Caco-2 (cell line): ENCODE measurements at regions of chr2 and their contacts with region 1.

Region 1: GRCh38 chr2:225512878-225513580 is 113.5 kb downstream of the NYAP2 start:
- DNase-seq: peak in 1 of 2 experiments; percentile 3
- H3K4me3 ChIP-seq: no peak overlapping the region
- H3K4me3 Mint-ChIP-seq: peak overlapping the region; percentile 66
- H3K27ac Mint-ChIP-seq: peak overlapping the region; percentile 94
- H3K4me1 ChIP-seq: peaks cover 5% of the 10 kb centered on the region; the same call in 1 of the 2 replicates
- H3K4me1 Mint-ChIP-seq: peaks cover 15% of the 10 kb centered on the region
- H3K27me3 ChIP-seq: no peaks in the 10 kb centered on the region
- H3K27me3 Mint-ChIP-seq: no peaks in the 10 kb centered on the region
- CTCF ChIP-seq: no peak

Region 2: DNA sequence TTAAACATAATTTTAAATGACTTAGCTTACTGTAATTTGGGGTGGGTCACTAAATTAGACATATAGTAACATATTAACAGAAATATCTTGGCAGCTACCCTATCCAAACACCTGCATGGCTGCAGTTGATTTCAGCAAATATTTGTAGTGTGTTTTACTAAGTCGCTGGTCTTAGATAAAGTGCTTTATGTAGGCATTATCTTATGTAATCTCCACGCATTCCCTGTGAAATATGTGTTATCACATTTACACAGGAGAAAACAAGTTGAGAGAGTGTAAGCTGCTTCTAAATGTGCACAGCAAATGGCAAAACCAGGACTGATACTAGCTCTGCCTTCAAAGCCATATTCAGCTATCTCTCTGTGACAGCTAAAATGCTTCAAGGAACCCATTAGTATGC is 41.5 kb before region 1 on chr2:
- CTCF ChIA-PET with region 1: no interaction called
- POLR2A ChIA-PET with region 1: no interaction called
- intact Hi-C with region 1: loop called (anchors 5 kb)
- DNase-seq: peak in 1 of 2 experiments; percentile 46
- H3K4me3 ChIP-seq: no peak overlapping the region
- H3K4me3 Mint-ChIP-seq: no peak overlapping the region
- H3K27ac Mint-ChIP-seq: no peak overlapping the region
- H3K4me1 ChIP-seq: peaks cover 38% of the 10 kb centered on the region
- H3K4me1 Mint-ChIP-seq: peaks cover 10% of the 10 kb centered on the region
- H3K27me3 ChIP-seq: no peaks in the 10 kb centered on the region; the same call in 1 of the 2 replicates
- H3K27me3 Mint-ChIP-seq: no peaks in the 10 kb centered on the region
- CTCF ChIP-seq: no peak